ENCODE measurements at regions of chr1 and their contacts with region 1.

Region 1: DNA sequence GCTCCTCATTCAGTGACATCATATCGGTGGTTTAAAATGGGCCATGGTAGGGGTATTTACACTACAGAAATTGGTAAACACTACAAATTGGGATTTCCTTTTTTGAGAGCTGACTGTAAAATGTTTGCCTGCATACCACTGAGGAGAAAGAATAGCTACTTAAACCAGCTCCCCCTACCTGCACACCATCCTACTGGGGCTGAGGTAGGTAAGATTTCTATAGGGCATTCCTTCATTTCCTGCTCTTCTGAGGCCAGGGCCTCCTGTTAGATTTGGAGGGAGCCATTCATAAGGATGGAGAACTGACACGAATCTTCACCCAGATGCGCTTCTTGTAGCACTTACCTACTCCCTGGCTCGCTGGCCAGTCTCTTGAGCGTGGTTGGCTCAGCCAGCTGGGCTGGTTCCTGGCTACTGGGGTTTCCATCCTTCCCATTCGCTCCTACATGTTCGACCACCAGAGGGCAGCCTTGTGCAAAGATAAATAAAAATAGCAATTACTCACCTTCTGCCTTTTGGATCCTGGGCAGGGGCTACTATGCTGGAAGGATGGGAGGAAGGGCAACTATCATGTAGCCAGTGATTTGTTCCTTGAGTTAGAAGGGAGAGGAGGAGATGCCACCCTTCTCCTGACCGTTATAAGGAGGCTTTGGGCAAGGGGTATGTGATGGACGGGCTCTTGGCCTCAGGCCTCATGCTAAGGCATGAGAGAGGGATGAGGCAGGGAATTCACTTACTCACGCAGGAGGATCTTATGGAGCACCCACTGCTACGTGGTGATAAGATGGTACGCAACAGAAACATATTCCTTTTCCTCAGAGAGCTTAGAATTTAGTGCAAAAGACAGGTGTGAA is 10.7 kb downstream of the OPTC start:
- DNase-seq: peak; percentile 89
- ATAC-seq: peak; percentile 81
- H3K4me3 Mint-ChIP-seq: no peak overlapping the region
- H3K27ac Mint-ChIP-seq: no peak overlapping the region
- H3K4me1 Mint-ChIP-seq: no peaks in the 10 kb centered on the region
- H3K27me3 Mint-ChIP-seq: no peaks in the 10 kb centered on the region
- CTCF ChIP-seq: peak; percentile 98

Region 2: DNA sequence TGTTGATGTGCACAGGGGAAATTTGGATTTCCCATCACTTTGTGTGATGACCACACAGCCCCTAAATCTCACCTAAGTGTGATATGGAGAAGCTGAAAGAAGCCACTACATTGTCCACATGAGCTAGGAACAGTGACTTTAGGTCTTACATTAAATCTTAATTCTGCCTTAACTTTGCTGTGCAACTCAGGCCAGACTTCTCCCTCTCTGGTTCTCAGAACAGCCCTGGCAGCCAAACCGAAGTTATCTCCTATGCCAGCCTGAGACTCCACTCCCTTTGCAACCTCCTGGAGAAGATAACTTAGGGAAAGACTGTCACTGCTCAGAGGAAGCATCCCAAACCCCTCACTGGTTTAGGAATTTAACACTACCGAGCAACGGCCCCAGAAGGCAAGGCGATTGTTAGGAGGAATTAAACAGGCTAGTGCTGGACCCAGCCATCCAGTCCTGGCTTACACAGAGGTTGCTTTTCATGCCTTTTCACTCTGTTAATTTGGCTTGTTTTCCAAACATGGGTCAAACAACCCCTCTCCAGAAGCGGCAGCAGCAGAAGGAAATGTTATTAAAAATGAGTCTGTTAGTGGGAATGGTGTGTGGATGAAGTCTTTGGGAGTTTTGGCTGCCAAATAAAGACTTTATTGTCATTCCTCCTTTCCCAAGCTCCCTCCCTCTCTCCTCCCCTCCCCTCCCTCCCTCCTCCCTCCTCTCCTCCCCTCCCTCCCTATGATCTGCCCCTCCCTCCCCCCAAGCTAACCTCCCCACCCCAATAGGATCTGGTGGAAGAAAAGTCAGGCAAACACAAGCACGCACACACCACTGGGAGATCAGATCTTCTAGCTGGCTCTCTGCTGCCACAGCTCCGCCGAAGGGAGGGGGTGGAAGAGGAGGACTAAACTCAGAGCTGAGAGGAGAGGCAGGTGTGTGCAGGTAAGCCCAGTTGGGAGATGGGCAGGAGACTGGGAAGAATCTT is 29.3 kb before region 1 on chr1 and contains the start of gene PRELP:
- CTCF ChIA-PET with region 1: no interaction called
- POLR2A ChIA-PET with region 1: no interaction called
- intact Hi-C with region 1: no loop called
- DNase-seq: no peak
- ATAC-seq: no peak
- H3K4me3 Mint-ChIP-seq: no peak within 1 kb of the TSS
- H3K27ac Mint-ChIP-seq: no peak within 1 kb of the TSS
- H3K4me1 Mint-ChIP-seq: peaks cover 7% of the 10 kb centered on the region
- H3K27me3 Mint-ChIP-seq: peaks cover 8% of the 10 kb centered on the region
- CTCF ChIP-seq: no peak
- total RNA-seq, gene PRELP: not detected

Region 3: GRCh38 chr1:203486618-203487370 is 17.8 kb before region 1 on chr1:
- CTCF ChIA-PET with region 1: interaction called, 13 read pairs
- POLR2A ChIA-PET with region 1: no interaction called
- intact Hi-C with region 1: no loop called
- DNase-seq: no peak
- ATAC-seq: no peak
- H3K4me3 Mint-ChIP-seq: peak overlapping the region; percentile 58
- H3K27ac Mint-ChIP-seq: no peak overlapping the region
- H3K4me1 Mint-ChIP-seq: peaks cover 6% of the 10 kb centered on the region
- H3K27me3 Mint-ChIP-seq: no peaks in the 10 kb centered on the region
- CTCF ChIP-seq: no peak

Region 4: GRCh38 chr1:203492082-203492747 is 12.4 kb before region 1 on chr1:
- CTCF ChIA-PET with region 1: interaction called, 13 read pairs
- POLR2A ChIA-PET with region 1: no interaction called
- intact Hi-C with region 1: no loop called
- DNase-seq: no peak
- ATAC-seq: no peak
- H3K4me3 Mint-ChIP-seq: no peak overlapping the region
- H3K27ac Mint-ChIP-seq: no peak overlapping the region
- H3K4me1 Mint-ChIP-seq: peaks cover 6% of the 10 kb centered on the region
- H3K27me3 Mint-ChIP-seq: no peaks in the 10 kb centered on the region
- CTCF ChIP-seq: no peak

Region 5: GRCh38 chr1:203593723-203594122 is 89.1 kb after region 1 on chr1:
- CTCF ChIA-PET with region 1: interaction called, 10 read pairs
- POLR2A ChIA-PET with region 1: no interaction called
- intact Hi-C with region 1: no loop called
- DNase-seq: peak; percentile 68
- ATAC-seq: peak; percentile 94
- H3K4me3 Mint-ChIP-seq: no peak overlapping the region
- H3K27ac Mint-ChIP-seq: no peak overlapping the region
- H3K4me1 Mint-ChIP-seq: peaks cover 8% of the 10 kb centered on the region
- H3K27me3 Mint-ChIP-seq: no peaks in the 10 kb centered on the region
- CTCF ChIP-seq: no peak

Region 6: DNA sequence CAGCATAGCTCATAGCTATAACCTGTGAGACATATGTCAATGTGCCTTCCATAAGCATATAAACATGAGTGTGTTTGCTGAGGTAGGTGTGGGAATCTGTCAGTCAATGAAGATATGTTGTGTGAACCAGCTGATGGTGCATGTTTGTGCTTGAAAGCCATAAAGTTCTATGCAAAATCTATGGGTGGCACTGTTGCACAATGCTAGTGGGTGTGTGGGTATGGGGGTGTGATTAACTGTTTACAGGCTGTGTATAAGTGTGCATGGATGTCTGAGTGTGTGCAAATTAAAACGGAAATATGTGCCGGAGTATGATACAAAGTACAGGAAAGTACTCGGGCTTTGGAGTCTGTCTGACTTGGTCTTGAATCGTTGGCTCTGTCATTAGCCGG is 121.0 kb after region 1 on chr1:
- CTCF ChIA-PET with region 1: interaction called, 8 read pairs
- POLR2A ChIA-PET with region 1: no interaction called
- intact Hi-C with region 1: loop called (anchors 10 kb)
- DNase-seq: peak; percentile 75
- ATAC-seq: peak; percentile 47
- H3K4me3 Mint-ChIP-seq: peak overlapping the region; percentile 90
- H3K27ac Mint-ChIP-seq: peak overlapping the region; percentile 73
- H3K4me1 Mint-ChIP-seq: peaks cover 58% of the 10 kb centered on the region
- H3K27me3 Mint-ChIP-seq: no peaks in the 10 kb centered on the region
- CTCF ChIP-seq: peak; percentile 37

Region 7: DNA sequence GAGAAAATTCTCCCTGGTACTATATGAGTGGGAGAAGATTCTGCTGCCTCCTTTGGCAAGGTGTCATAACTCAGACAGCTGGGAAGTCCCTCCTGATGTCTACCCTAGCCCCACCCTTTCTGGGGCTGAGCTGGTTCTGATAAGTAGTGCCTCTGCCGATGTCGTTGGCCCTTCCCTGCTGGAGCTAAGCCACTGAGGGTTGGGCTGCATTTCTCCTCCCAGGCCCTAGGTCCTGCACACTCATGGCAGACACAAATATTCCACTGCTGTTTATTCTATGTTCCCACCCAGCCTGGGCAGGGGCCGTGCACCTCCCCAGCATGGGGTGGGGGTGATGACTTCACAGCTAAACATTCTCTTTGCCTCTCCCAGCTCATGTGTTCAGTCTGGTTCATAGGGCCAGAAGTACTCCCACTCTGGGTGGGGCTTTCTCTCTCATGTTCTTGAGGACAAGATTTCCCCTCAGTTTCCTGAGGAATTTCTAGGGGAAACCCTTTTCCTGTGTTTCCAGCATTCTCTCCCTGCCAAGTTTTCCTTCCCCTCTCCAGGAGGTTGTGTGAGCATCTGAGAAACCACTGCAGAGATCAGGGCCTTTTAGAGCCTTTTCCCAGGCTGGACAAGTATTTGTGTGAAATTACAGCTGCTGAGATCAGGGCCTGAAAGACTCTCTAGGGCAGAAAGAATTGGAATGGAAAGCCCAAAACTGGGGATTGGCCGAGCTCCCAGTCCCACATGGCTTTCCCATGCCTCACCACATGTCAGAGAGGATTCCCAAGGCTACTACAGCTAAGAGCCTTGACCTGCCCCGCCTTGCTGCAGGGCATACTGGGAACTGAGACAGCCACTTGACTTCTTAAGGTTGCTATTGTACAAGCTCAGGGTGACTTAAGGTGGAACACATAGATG is 188.2 kb after region 1 on chr1:
- CTCF ChIA-PET with region 1: interaction called, 174 read pairs
- POLR2A ChIA-PET with region 1: no interaction called
- intact Hi-C with region 1: no loop called
- DNase-seq: no peak
- ATAC-seq: peak; percentile 64
- H3K4me3 Mint-ChIP-seq: no peak overlapping the region
- H3K27ac Mint-ChIP-seq: peak overlapping the region; percentile 50
- H3K4me1 Mint-ChIP-seq: peaks cover 20% of the 10 kb centered on the region
- H3K27me3 Mint-ChIP-seq: no peaks in the 10 kb centered on the region
- CTCF ChIP-seq: no peak

Measured in activated CD8-positive, alpha-beta T cell treated with anti-CD3 and anti-CD28 coated beads for 36 hours (primary cell).